Stomach (tissue), 19 donors: ENCODE measurements at regions of chr16 and their contacts with region 1.

Region 1: GRCh38 chr16:87416826-87417527 is 24.8 kb downstream of the MAP1LC3B start:
- DNase-seq: peak in 1 of 2 donors; percentile 69
- H3K4me3 ChIP-seq: no peak overlapping the region
- H3K27ac ChIP-seq: no peak overlapping the region
- H3K4me1 ChIP-seq: peaks cover 0 to 11% (median 0%) of the 10 kb centered on the region in 4 donors
- H3K27me3 ChIP-seq: no peaks in the 10 kb centered on the region
- CTCF ChIP-seq: peak in 5 of 7 experiments; percentile 28 to 58 (median 40)
- EP300 ChIP-seq: no peak
- POLR2A ChIP-seq: no peak

Region 2: DNA sequence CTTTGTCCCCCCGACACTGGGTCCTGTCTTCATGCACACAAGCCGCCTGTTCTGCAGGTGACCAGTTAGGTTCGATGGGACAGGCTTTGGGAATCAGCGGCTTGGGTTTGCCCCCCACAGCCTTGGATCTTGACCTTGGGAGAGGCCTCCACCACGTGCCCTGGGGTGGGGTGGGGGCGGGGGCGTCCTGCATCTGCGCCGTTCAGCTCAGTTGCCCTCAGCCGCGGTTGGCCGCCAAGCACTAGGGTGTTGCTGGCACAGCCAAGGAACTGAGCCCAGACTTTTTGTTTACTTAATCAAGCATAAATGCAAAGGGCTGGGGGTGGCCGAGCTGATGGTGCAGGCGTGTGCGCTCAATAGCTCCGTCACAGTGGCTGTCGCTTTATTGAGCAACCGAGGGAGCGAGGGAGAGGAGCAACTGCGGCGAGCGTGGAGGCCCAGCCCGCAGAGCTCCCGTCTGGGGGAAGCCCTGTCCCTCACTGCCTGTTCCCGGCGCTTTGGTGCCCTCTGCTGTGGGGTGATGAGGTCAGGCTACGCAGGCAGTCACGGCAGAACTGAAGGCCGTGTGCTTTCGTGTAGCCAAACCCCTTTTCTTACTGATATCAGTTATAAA is 219.2 kb after region 1 on chr16:
- intact Hi-C with region 1: loop called (anchors 10 kb)
- DNase-seq: peak; percentile 80 to 89
- H3K4me3 ChIP-seq: peak overlapping the region; percentile 5 to 39 (median 20)
- H3K27ac ChIP-seq: no peak overlapping the region
- H3K4me1 ChIP-seq: peaks cover 12 to 18% (median 17%) of the 10 kb centered on the region in 4 donors
- H3K27me3 ChIP-seq: peaks cover 0 to 39% (median 8%) of the 10 kb centered on the region in 3 donors
- CTCF ChIP-seq: peak in 4 of 7 experiments; percentile 11 to 53 (median 44)
- EP300 ChIP-seq: no peak
- POLR2A ChIP-seq: no peak

Region 3: GRCh38 chr16:87705771-87706275 is 288.8 kb after region 1 on chr16:
- intact Hi-C with region 1: no loop called
- DNase-seq: peak; percentile 37 to 74
- H3K4me3 ChIP-seq: peak overlapping the region in 3 of 4 donors; percentile 12 to 25 (median 13)
- H3K27ac ChIP-seq: no peak overlapping the region
- H3K4me1 ChIP-seq: peaks cover 0 to 22% (median 15%) of the 10 kb centered on the region in 4 donors
- H3K27me3 ChIP-seq: no peaks in the 10 kb centered on the region
- CTCF ChIP-seq: no peak
- EP300 ChIP-seq: no peak
- POLR2A ChIP-seq: no peak